ENCODE measurements at regions of chr16 and their contacts with region 1.

Region 1: GRCh38 chr16:18801197-18801972 is at the start of gene ARL6IP1:
- DNase-seq: peak; percentile 97 to 100 (median 100)

Region 2: GRCh38 chr16:18853694-18854093 is 52.3 kb after region 1 on chr16:
- intact Hi-C with region 1: no loop called
- DNase-seq: no peak

Region 3: DNA sequence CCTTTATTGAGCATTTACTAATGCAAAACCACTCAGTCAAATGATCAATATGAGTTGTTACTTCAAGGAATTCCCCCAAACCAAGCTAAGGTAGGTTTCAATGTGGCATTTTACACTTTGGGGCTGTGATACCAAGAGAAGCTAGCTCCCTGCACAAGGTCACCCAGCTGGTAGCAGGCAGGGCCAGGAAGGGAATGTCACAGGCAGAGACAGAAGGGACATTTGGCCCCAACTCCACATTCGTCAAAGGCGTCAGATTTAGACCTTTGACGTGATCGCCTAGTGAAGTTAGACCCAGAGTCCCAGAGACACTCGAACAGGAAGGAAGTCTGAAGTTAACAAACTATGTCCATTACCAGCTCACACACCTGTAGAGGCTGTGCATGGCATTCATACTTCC is 130.4 kb after region 1 on chr16:
- intact Hi-C with region 1: loop called (anchors 1 kb)
- DNase-seq: no peak

Region 4: DNA sequence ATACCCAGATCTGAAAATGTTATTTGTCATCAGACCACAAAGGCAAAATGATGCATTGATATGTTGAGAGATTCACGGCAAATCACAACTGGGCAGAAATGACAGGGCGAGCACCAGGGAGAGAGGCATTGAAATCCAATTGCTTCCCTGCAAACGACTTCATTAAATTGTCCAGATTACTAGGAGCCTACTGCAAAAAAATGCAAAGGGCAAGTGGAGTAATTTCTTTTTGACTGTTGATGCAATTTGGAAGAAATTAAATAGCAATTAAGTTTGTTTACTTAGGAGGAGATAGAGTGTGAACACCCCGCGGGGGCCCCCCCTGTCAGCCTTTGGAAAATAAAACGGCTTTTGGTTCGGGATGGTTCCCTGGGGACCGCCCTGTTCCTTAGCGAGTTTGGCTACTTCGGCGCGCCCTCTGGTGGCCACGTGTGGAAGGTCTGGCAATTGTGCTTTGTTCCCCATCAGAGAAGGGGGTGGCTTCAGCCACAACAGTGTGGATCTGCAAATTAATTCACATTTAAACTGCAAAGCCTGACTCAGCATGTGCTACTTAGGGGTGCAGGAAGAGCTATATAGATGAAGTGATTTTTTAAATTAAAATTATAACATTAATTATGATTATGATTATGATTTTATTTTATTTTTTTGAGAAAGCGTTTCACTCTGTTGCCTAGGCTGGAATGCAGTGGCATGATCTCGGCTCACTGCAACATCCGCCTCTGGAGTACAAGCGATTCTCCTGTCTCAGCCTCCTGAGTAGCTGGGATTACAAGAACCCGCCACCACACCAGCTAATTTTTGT is 167.9 kb after region 1 on chr16:
- intact Hi-C with region 1: loop called (anchors 1 kb)
- DNase-seq: peak; percentile 78 to 98 (median 94)

Region 5: DNA sequence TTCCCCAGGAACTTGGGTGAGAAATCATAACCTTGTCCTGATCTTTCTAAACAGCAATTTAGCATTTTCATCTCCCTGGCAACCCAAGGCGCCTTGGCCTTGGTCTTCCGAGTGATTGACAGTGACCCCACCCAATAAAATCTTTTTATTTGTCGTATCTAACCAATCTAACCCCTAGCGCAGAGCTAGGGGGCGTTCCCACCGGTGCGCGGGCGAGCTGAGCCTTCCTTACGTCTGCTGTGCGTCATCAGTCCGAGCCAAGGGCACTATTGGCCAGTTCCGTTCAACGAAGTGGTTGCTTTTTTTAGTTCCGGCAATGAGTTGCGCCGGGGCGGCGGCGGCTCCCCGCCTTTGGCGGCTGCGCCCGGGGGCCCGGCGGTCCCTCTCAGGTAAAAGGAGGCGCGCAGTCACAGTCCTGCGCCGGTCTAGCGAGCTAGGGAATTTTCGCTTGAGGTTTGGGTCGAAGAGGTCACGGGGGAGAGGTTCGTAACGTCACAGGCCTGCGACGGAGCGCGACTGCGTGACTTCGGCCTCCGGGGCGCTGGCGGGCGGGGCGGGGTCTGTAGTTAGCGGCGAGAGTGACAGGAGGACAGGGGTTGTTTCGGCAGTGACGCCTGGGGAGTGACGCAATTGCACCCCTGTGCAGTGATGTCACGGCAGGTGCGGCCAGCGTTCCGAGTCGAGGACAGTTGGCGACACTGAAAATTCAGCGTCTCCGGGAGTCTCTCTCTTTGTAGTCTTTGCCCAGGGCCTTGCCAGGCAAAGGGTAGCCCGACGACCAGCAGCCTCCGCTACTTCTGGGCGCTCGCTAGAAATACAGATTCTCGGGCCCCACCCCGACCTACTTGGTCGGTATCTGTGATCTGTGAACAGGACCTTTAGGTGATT is 266.2 kb after region 1 on chr16 and contains the start of gene COQ7:
- intact Hi-C with region 1: loop called (anchors 5 kb)
- DNase-seq: peak; percentile 93 to 99 (median 97)

Region 6: DNA sequence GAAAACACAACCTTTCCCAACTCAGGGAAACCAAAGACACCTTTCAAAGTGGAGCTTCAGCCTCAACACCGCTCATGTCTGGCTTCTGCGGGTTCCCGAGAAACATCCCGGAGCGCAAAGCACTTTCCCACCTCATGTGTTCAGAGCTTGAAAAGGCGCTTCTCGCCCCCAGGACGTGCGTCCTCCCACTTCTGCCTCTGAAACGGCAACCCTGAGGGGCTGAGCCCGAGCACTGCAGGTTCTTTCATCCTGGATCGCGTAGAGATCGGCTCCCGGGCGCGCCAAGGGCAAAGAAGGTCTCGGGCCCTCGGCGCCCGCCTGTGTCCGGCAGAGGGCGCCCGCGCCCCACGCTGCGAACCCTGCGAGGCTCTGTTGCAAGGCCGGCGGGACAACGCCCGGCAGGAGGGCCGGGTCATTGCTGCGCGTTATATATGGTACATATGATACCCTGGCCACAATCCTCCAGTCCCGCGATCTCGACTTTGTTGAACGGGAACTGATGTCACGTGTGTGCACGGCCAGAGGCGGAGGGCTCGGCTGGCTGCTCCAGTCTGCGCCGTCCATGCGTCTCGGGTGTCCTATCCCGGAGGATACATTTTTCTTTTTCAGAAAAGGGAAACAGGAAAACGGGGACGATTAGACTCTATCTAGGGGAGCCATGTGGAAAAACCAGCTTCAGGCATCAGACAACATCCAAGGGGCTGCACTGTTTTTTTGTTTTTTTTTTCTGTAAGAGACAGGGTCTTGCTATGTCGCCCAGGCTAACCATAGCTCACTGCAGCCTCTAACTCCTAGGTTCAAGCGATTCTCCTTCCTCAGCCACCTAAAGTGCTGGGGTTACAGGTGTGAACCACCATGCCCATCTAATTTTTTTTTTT is 285.2 kb after region 1 on chr16:
- intact Hi-C with region 1: no loop called
- DNase-seq: peak; percentile 58 to 97 (median 82)

Region 7: DNA sequence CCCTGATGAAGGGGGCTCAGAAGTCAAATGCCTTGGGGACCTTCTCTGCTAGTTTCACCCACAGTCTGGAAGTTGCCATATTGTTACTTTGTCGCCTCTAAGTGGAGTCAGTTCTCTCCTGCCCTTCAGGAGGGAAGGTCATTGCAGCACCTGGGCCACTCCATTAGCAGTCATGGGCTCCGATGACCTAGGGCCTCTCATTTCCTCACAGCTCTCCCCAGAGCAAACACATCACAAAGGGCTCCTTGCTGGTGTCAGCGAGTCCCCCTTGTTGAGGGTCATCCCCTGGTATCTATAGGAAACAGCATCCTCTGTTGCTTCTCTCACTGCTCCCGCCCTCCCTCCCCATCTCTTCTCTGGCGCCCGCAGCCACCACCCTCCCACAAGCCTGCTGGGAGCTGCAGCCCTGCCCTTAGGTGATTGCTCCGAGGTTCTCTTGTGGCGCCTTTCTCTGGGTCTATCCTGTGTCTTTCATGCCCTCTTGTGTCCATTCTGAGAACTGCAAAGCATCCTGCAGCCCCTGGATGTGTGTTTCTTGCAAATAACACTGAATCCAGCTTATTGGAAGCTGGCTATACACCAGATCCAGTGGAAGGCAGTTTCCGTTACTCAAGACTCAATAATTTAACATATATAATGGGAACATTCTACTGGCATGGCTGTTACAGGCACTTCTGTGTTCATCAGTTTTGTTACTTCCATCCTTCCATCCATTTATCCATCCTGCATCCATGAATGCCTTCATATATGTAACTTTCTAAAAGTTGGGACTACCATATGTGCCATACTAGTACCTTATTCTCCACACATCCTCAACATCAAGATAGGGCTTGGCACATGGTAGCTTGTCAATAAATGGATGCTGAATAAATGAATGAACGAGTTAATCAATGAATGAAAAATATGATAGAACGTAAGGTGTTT is 1582.0 kb after region 1 on chr16:
- intact Hi-C with region 1: no loop called
- DNase-seq: peak in 8 of 10 donors; percentile 26 to 89 (median 58)